ENCODE measurements at regions of chrX and their contacts with region 1.

Region 1: DNA sequence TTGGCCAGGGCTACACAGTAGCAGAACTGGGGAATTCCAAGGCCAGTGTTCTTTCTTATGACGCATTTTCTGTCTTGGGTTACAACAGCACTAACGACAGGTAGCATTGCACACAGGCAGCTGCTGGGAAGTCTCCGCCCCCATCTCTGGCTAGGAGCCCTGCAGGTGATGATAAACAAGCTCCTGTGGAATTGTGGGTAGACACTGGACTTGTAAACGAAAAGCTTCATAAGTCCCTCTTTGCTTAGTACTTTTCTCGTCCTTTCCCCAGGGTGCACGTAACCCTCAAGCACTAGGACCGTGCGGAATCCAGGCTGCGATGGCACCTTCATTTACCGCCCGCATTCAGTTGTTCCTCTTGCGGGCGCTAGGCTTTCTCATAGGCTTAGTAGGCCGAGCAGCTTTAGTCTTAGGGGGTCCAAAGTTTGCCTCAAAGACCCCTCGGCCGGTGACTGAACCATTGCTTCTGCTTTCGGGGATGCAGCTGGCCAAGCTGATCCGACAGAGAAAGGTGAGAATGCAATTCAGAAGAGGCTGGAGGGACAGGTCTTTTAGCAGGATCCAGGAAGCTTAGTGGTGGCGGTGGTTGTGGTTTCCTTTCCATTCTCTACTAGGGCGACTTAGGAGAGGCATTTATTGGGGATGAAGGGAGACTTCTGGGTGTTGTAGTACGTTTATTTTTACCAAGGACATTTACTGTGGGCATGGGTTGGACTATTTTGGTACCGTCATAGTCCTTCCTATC is at the start of gene FAAH2:
- DNase-seq: peak; percentile 65
- H3K4me3 Mint-ChIP-seq: peak within 1 kb of the TSS; percentile 88
- H3K27ac Mint-ChIP-seq: peak within 1 kb of the TSS; percentile 94
- H3K4me1 Mint-ChIP-seq: peaks cover 68% of the 10 kb centered on the region
- H3K27me3 Mint-ChIP-seq: no peaks in the 10 kb centered on the region
- total RNA-seq, gene FAAH2: 7.2 and 7.3 TPM in 2 replicates

Region 2: DNA sequence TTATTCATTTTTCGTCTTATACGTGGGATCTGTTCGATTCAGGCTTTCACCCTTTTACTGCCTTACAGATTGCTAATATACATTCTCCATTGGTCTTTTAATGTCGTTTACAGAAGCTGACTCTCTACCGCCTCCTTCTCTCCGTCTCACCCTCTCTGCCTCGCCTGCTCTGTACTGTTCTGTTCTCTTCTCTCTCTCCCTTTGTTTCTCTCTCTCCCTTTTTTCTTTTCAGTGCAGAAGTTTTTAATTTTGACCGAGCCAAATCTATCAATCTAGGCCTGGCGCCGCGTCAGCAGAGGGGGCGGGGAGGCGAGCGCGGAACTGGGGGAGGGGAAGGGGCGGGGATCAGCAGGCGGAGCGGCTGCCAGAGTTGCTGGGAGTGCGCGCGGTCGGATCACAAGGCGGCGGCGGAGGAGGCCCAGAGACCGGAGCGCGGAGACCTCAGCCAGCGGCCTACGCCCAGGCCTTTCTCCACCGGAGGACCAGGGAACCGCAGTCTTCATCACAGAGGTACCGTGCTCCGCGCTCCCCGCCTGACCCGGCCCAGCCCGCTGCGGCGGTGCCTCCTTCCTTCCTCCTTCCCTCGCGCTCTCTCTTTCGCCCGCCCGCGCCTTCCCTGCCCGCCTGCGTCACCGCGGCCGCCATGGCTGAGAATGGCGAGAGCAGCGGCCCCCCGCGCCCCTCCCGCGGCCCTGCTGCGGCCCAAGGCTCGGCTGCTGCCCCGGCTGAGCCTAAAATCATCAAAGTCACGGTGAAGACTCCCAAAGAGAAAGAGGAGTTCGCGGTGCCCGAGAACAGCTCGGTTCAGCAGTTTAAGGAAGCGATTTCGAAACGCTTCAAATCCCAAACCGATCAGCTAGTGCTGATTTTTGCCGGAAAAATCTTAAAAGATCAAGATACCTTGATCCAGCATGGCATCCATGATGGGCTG is 723.2 kb before region 1 on chrX and contains the start of gene UBQLN2:
- intact Hi-C with region 1: loop called (anchors 5 kb)
- DNase-seq: peak; percentile 67
- H3K4me3 Mint-ChIP-seq: peak within 1 kb of the TSS; percentile 88
- H3K27ac Mint-ChIP-seq: peak within 1 kb of the TSS; percentile 97
- H3K4me1 Mint-ChIP-seq: peaks cover 12% of the 10 kb centered on the region
- H3K27me3 Mint-ChIP-seq: no peaks in the 10 kb centered on the region
- total RNA-seq, gene UBQLN2: 38.3 and 41.3 TPM in 2 replicates

Region 3: DNA sequence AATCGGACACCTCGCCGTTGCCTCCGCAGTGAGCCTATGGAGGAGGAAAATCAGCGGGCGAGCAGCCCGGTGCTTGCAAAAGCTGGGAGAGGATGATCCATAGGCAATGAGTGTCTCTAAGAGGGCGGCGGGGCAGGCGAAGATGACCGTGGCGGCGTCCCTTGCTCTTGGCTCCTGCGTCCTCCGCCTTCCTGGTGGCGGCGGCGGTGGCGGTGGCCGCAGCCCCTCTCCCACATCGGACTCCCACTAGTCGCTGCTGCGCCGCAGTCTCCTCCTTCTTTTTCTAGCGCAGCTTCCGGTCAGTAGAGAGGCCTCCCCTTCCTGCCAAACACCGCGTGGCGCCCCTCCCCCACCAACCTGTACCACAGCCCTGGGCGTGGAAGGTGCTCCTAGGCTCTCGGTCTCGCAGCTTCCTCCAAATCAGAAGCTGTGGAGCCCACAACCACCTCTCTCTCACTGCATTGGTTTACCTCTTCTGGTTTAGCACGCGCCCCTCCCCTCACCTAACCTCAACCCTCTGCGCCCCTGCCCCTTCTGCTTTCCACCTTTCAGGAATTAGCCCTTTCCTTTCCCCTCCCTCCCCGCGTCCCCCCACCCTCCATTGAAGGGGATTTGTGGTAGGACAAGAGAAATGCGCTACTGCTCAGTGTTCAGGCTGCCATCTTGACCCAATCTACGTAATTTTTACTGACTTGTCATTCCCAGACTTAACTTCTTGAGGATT is 291.2 kb before region 1 on chrX and contains the start of gene SPIN3:
- intact Hi-C with region 1: loop called (anchors 5 kb)
- DNase-seq: peak; percentile 42
- H3K4me3 Mint-ChIP-seq: peak within 1 kb of the TSS; percentile 90
- H3K27ac Mint-ChIP-seq: peak within 1 kb of the TSS; percentile 83
- H3K4me1 Mint-ChIP-seq: peaks cover 18% of the 10 kb centered on the region
- H3K27me3 Mint-ChIP-seq: no peaks in the 10 kb centered on the region
- total RNA-seq, gene SPIN3: 9.4 and 9.6 TPM in 2 replicates

Region 4: DNA sequence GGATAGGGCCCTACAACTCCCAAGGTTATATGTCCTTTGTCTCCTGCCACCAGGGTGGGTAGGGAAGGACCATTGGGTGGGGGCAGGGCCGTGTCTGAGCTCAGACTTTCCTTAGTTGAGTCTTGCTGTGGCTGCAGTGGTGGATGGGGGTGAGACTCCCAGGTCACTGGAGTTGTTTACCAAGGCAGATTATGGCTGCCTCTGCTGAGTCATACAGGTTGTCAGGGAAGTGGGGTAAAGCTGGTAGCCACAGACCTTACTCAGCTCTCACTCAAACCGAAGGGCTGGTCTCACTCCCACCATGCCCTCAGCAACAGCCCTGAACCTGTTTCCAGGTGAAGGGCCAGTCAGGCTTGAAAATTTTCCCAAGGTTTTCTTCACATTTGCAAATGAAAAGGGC is 59.0 kb before region 1 on chrX:
- intact Hi-C with region 1: loop called (anchors 5 kb)
- DNase-seq: peak; percentile 8
- H3K4me3 Mint-ChIP-seq: no peak overlapping the region
- H3K27ac Mint-ChIP-seq: peak overlapping the region; percentile 55
- H3K4me1 Mint-ChIP-seq: peaks cover 13% of the 10 kb centered on the region
- H3K27me3 Mint-ChIP-seq: no peaks in the 10 kb centered on the region

Region 5: DNA sequence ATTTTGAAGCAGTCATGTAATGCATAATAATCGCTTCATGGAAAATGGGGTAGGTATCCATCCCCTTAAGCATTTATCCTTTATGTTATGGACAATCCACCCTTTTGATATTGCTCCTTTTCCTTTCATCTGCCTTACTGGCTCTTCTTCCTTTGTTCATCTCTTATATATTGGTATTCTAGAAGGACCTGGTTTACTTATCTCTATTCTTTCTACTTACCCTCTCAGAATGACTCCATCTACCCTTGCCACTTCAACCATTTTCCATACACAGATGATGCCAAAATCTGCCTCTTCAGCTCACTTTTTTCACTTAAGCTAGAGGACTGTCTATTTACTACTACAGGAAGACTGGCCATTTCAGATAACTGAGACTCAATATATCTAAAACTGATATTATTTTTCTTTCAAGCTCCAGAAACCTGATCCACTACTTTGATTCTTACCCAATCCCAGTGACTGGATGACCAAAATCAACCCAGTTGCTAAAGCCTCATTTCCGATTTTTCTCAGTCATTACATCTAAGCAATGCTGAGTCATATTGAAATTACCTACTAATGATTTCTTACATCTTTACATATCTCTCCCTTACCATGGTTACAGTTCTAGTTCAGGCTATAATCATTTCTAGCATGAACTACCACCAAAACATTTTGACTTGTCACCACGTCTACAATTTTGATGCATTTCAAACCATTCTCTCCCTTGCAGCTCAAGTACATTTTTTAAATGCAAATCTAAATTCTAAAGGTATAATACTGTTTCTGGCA is 93.5 kb after region 1 on chrX:
- intact Hi-C with region 1: loop called (anchors 1 kb)
- DNase-seq: no peak
- H3K4me3 Mint-ChIP-seq: no peak overlapping the region
- H3K27ac Mint-ChIP-seq: peak overlapping the region; percentile 85
- H3K4me1 Mint-ChIP-seq: peaks cover 16% of the 10 kb centered on the region
- H3K27me3 Mint-ChIP-seq: no peaks in the 10 kb centered on the region

Region 6: DNA sequence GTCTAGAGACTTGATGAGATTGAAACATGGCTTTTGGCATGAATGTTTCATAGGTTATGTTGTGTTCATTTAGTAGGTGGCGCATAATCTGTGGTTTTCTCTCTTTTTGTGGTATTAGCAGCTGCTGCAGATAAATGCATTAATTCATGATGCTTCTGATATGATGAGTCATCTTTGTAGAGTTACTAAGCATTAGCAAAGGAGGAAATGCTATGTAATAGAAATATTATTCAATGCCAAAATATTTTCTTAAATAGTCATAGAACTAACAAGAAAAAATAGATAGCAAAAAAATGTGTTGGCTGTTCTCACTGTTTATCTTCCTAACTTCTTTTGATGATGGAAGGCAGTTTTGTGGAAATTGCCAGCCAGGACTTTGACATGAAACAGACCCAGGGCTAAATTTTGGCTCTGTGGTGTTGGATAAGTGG is 308.7 kb after region 1 on chrX:
- intact Hi-C with region 1: loop called (anchors 2 kb)
- DNase-seq: no peak
- H3K4me3 Mint-ChIP-seq: peak overlapping the region; percentile 78
- H3K27ac Mint-ChIP-seq: peak overlapping the region; percentile 67
- H3K4me1 Mint-ChIP-seq: peaks cover 34% of the 10 kb centered on the region
- H3K27me3 Mint-ChIP-seq: no peaks in the 10 kb centered on the region

Measured in activated T-helper 1 cell treated with anti-CD3 and anti-CD28 coated beads, Interleukin-12 subunit alpha, Interleukin-12 subunit beta, Interleukin-2, Interleukin-4 antibody, amounts not matched to agents 30 ng/mL and 10 ng/mL and 1 ng/mL, durations not matched to agents 14 hours and 24 hours and 36 hours (primary cell).